Activated naive CD4-positive, alpha-beta T cell treated with anti-CD3 and anti-CD28 coated beads for 36 hours (primary cell): ENCODE measurements at regions of chr3 and their contacts with region 1.

Region 1: DNA sequence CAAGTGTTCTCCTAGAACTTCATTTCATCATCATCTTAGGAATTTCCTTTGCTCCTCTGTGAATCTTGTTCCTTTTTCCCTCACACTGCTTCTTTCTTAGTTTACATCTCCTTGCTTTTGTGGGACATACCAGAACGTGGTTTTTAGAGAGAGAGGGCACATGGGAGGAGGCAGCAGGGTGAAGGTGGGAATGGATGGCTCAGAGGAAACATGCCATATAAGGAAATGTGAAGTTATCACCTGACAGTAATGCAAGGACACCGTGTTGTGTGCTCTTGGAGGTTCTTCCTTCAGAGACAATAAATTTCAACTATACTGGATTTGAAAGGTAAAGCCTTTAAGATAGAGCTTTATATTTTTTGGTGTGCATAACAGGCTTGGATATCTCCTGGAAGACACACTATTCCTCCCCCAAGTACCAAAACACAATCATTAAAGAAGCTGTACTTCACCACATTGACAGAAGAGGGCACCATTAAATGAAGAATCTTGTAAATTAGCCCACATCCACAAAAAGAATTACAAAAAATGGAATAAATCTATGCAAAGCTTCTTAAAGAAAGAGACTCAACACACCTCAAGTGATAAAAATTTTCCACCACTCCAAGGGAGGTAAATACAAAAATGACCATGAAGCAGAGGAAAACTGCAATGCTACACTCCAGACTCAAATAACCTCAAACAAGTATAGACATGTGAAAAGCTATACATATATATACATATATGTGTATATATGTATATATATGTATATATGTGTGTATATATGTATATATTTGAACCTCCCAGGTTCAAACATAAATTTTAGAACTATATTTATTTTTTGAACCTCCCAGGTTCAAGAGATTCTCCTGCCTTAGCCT is 26.1 kb downstream of the RPL39L start:
- DNase-seq: no peak
- H3K4me3 Mint-ChIP-seq: no peak overlapping the region
- H3K27ac Mint-ChIP-seq: no peak overlapping the region
- H3K4me1 Mint-ChIP-seq: peaks cover 7% of the 10 kb centered on the region
- H3K27me3 Mint-ChIP-seq: no peaks in the 10 kb centered on the region

Region 2: DNA sequence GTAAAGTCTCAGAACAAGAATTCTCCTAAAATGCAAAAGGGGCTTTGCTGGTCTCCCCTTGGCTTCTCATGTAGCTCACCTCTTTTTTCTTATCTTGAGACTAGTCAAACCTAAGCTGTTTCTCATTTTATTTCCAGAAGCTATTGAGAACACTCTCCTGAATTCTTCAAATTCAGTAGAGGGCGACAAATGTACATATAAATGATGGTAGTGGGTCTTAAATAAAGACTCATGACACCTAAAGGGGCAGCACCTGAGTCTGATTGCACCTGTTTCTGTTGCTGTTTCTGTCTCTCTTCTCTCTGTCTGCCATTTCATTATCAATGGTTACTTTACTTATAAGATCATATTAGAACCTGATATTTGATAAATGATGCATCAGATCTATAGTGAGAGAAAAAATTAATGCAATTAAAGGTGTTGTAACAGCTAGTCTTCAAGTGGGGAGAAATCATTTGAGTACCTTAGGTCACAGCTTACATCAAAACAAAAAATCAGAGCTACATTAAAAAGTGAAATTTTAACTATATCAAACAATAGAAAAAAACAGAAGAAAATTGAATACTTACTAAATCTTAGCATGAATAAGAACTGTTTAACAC is 263.7 kb before region 1 on chr3:
- CTCF ChIA-PET with region 1: interaction called, 31 read pairs
- intact Hi-C with region 1: loop called (anchors 1 kb)
- DNase-seq: peak; percentile 45
- H3K4me3 Mint-ChIP-seq: no peak overlapping the region
- H3K27ac Mint-ChIP-seq: no peak overlapping the region
- H3K4me1 Mint-ChIP-seq: peaks cover 12% of the 10 kb centered on the region
- H3K27me3 Mint-ChIP-seq: peaks cover 3% of the 10 kb centered on the region

Region 3: DNA sequence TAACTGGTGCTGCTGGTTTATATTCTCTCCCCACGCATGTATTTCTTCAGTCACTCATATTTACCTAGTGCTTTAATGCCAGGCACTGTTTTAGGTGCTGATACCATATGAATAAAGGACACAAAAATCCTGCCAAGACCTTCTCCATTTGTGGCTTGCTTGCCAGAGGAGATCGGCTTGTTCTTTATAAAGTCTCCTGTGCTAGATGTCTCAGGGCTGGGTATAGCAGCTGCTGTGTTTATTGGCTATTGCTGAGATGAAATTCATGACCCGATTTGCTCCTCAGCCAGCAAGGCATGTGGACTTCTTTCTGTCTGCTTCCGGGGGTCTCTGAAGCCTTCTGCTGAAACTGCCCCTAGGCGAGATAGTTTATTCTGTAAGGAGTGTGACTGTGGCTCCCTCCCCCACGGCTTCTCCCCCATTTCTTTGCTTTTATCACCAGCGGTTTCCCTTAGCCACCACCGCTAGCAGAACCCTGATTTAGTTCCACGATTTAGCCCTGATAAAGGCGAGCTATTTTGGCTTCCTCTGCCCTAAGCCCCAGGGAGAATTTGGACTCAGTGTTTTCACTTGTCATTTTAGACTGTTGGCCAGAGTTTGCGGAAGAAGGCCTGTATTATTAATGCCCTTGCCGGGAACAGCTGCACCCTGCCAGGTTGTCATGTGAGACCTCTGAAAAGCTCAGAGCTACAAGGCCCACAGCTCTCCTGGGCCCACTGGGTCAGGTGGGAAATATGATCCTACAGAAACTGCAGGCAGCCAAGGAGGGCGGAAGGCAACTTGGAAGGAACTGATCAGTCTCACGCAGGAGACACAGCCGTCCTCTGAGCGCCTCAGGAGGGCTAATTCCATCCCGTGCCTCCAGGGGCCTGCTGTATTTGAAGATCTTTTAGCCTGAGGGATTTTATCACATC is 136.1 kb before region 1 on chr3:
- CTCF ChIA-PET with region 1: no interaction called
- intact Hi-C with region 1: no loop called
- DNase-seq: no peak
- H3K4me3 Mint-ChIP-seq: no peak overlapping the region
- H3K27ac Mint-ChIP-seq: no peak overlapping the region
- H3K4me1 Mint-ChIP-seq: peaks cover 15% of the 10 kb centered on the region
- H3K27me3 Mint-ChIP-seq: no peaks in the 10 kb centered on the region

Region 4: GRCh38 chr3:187125319-187126031 is 12.3 kb after region 1 on chr3:
- CTCF ChIA-PET with region 1: interaction called, 18 read pairs
- intact Hi-C with region 1: loop called (anchors 1 kb)
- DNase-seq: no peak
- H3K4me3 Mint-ChIP-seq: no peak overlapping the region
- H3K27ac Mint-ChIP-seq: no peak overlapping the region
- H3K4me1 Mint-ChIP-seq: peaks cover 17% of the 10 kb centered on the region
- H3K27me3 Mint-ChIP-seq: no peaks in the 10 kb centered on the region

Region 5: DNA sequence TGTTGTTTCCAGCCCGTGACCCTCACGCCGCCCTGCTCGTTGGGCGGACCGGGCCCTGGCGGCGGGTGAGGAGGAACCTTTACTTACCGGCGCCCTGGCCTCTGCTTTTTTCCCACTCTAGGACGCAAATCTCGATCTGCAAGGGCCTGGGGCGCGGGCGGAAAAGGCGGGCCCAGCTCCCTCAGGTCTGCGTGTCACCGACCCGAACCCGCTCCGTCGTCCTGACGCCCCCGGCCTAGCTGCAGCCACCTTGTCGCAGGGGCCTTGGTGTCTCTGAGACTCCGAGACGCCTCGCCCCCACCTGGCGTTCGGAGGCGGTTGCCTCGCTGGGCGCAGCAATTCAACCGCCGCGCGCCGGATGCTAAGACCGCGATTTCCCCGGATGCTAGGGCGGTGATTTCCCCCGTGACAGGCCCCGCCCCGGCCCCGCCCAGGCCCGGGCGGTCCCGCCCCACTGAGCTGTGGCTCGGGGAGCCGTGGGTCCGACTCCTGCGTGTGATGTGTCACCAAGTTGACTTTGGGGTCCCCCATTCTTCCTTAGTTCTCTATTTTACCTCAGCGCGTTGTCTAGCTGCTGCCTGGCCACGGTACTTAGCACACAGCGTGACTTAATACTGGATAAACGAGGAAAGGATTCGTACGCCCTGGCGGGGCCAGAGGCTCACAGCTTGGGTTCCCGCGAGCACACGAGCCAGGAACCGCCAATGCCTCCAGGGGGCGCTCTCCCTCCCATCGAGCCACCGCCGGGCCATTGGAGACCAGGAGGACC is 26.1 kb after region 1 on chr3 and contains the start of gene RPL39L:
- CTCF ChIA-PET with region 1: interaction called, 42 read pairs
- intact Hi-C with region 1: loop called (anchors 1 kb)
- DNase-seq: peak; percentile 95
- H3K4me3 Mint-ChIP-seq: peak within 1 kb of the TSS; percentile 91
- H3K27ac Mint-ChIP-seq: peak within 1 kb of the TSS; percentile 95
- H3K4me1 Mint-ChIP-seq: peaks cover 21% of the 10 kb centered on the region
- H3K27me3 Mint-ChIP-seq: no peaks in the 10 kb centered on the region
- total RNA-seq, gene RPL39L: 19.2 to 20.9 TPM

Region 6: DNA sequence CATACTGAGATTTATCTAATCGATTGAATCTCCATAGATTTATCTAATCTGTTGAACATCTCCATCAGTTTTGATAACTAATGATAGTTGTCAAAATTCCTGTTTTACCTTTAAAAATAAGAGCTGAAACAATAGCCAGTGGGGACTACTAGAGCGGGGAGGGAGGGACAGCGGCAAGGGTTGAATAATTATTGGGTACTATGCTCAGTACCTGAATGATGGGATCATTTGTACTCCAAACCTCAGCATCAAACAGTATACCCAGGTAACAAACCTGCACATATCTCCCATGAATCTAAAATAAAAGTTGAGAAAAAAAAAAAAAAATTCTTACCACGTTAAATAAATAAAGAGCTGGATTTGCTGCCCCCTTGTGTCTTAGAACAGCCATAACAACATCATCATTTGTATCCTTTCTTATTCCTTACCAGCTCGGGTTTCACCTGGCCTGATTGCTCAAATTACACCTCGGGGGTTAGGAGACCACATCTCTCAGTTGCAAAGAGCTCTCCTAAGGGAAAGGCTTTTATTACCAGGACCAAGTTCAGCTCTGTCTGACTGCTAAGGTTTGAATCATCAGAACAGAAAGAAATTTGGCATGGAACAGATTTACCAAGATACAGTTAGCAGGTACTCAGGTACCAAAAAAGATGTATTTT is 51.9 kb after region 1 on chr3:
- CTCF ChIA-PET with region 1: interaction called, 136 read pairs
- intact Hi-C with region 1: loop called (anchors 1 kb)
- DNase-seq: peak; percentile 47
- H3K4me3 Mint-ChIP-seq: no peak overlapping the region
- H3K27ac Mint-ChIP-seq: no peak overlapping the region
- H3K4me1 Mint-ChIP-seq: peaks cover 6% of the 10 kb centered on the region
- H3K27me3 Mint-ChIP-seq: no peaks in the 10 kb centered on the region

Region 7: GRCh38 chr3:187198490-187198889 is 85.3 kb after region 1 on chr3:
- CTCF ChIA-PET with region 1: no interaction called
- intact Hi-C with region 1: no loop called
- DNase-seq: no peak
- H3K4me3 Mint-ChIP-seq: no peak overlapping the region
- H3K27ac Mint-ChIP-seq: no peak overlapping the region
- H3K4me1 Mint-ChIP-seq: no peaks in the 10 kb centered on the region
- H3K27me3 Mint-ChIP-seq: no peaks in the 10 kb centered on the region

Region 8: DNA sequence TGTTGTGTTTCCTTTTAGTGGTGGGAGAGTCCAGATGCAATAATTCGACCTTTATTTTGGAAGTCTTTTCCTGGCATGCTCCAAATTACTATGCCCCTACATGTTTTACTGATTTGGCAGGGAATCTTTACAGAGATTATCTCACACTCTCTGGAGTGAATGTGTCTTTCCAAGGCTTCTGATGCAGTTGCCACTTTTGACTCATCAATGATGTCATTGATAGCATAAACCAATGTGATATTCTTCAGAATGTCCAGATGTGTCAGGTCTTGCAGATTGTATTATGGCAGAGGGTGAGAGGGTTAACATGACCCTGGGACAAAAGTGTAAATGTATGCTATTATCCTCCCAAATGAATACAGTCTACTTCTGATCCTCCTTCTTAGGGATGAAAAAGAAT is 264.7 kb after region 1 on chr3:
- CTCF ChIA-PET with region 1: no interaction called
- intact Hi-C with region 1: no loop called
- DNase-seq: no peak
- H3K4me3 Mint-ChIP-seq: no peak overlapping the region
- H3K27ac Mint-ChIP-seq: no peak overlapping the region
- H3K4me1 Mint-ChIP-seq: no peaks in the 10 kb centered on the region
- H3K27me3 Mint-ChIP-seq: no peaks in the 10 kb centered on the region

Region 9: DNA sequence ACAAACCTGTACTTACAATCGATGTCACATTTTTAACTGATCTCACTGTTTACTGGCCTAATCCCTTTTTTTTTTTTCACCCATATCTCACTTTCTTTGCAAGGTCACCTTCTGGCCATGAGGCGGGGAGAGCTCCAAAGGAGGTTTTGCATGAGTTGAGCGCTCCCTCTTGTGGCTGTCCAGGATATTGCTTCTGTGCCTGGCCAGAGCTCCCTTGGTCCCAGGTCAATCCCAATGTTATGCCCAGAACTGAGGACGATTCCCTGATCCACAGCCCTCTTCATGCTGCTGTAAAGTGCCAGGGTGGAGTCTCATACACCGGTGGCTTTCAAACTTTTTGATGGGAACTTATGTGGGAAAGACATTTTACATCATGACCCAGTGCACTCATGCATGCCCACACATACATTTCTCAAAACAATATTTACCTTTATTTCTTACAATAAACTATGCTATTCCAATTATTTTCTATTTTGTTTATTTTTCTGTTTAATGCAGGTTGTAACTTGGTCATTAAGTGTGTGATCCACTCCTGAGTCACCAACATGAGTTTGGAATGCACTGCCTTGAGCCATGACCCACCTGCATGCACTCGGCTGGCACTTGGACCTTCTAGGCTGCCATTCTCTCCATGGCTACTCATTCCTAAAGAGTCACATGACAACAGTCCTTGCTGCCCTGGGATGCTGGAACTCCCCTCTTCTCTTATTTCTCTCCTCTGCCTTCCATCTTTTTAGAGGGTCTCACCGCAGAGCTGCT is 566.7 kb after region 1 on chr3:
- CTCF ChIA-PET with region 1: no interaction called
- intact Hi-C with region 1: loop called (anchors 10 kb)
- DNase-seq: peak; percentile 80
- H3K4me3 Mint-ChIP-seq: no peak overlapping the region
- H3K27ac Mint-ChIP-seq: no peak overlapping the region
- H3K4me1 Mint-ChIP-seq: peaks cover 6% of the 10 kb centered on the region
- H3K27me3 Mint-ChIP-seq: peaks cover 28% of the 10 kb centered on the region